Calu3 (cell line): ENCODE measurements at regions of chr22 and their contacts with region 1.

Region 1: GRCh38 chr22:35430897-35431322 is 31.0 kb downstream of the MCM5 start:
- DNase-seq: peak; percentile 94
- H3K4me3 Mint-ChIP-seq: no peak overlapping the region
- H3K27ac Mint-ChIP-seq: no peak overlapping the region
- H3K4me1 Mint-ChIP-seq: no peaks in the 10 kb centered on the region
- H3K27me3 Mint-ChIP-seq: no peaks in the 10 kb centered on the region
- CTCF ChIP-seq: peak; percentile 97

Region 2: GRCh38 chr22:35140879-35141745 is 289.8 kb before region 1 on chr22:
- CTCF ChIA-PET with region 1: no interaction called
- intact Hi-C with region 1: no loop called
- DNase-seq: peak; percentile 23
- H3K4me3 Mint-ChIP-seq: no peak overlapping the region
- H3K27ac Mint-ChIP-seq: no peak overlapping the region
- H3K4me1 Mint-ChIP-seq: no peaks in the 10 kb centered on the region
- H3K27me3 Mint-ChIP-seq: peaks cover 45% of the 10 kb centered on the region
- CTCF ChIP-seq: no peak

Region 3: GRCh38 chr22:35330258-35330861 is 100.5 kb before region 1 on chr22:
- CTCF ChIA-PET with region 1: no interaction called
- intact Hi-C with region 1: no loop called
- DNase-seq: no peak
- H3K4me3 Mint-ChIP-seq: no peak overlapping the region
- H3K27ac Mint-ChIP-seq: no peak overlapping the region
- H3K4me1 Mint-ChIP-seq: no peaks in the 10 kb centered on the region
- H3K27me3 Mint-ChIP-seq: no peaks in the 10 kb centered on the region
- CTCF ChIP-seq: no peak

Region 4: GRCh38 chr22:35582861-35583670 is 152.2 kb after region 1 on chr22:
- CTCF ChIA-PET with region 1: interaction called, 25 read pairs
- intact Hi-C with region 1: loop called (anchors 1 kb)
- DNase-seq: peak; percentile 69
- H3K4me3 Mint-ChIP-seq: no peak overlapping the region
- H3K27ac Mint-ChIP-seq: no peak overlapping the region
- H3K4me1 Mint-ChIP-seq: peaks cover 11% of the 10 kb centered on the region
- H3K27me3 Mint-ChIP-seq: peaks cover 9% of the 10 kb centered on the region
- CTCF ChIP-seq: peak; percentile 86